ENCODE measurements at regions of chrX and their contacts with region 1.

Region 1: GRCh38 chrX:13087322-13088155 is 43.1 kb upstream of the FAM9C start:
- DNase-seq: peak in 7 of 9 experiments; percentile 41 to 94 (median 75)
- ATAC-seq: peak; percentile 60
- H3K4me3 ChIP-seq: peak overlapping the region in 1 of 2 experiments; percentile 10
- H3K4me3 Mint-ChIP-seq: peak overlapping the region; percentile 80
- H3K27ac ChIP-seq: peak overlapping the region; percentile 57 to 96
- H3K27ac Mint-ChIP-seq: peak overlapping the region; percentile 98
- H3K4me1 ChIP-seq: peaks cover 90% of the 10 kb centered on the region
- H3K4me1 Mint-ChIP-seq: peaks cover 84% of the 10 kb centered on the region
- H3K27me3 ChIP-seq: no peaks in the 10 kb centered on the region
- H3K27me3 Mint-ChIP-seq: no peaks in the 10 kb centered on the region
- CTCF ChIP-seq: no peak

Region 2: DNA sequence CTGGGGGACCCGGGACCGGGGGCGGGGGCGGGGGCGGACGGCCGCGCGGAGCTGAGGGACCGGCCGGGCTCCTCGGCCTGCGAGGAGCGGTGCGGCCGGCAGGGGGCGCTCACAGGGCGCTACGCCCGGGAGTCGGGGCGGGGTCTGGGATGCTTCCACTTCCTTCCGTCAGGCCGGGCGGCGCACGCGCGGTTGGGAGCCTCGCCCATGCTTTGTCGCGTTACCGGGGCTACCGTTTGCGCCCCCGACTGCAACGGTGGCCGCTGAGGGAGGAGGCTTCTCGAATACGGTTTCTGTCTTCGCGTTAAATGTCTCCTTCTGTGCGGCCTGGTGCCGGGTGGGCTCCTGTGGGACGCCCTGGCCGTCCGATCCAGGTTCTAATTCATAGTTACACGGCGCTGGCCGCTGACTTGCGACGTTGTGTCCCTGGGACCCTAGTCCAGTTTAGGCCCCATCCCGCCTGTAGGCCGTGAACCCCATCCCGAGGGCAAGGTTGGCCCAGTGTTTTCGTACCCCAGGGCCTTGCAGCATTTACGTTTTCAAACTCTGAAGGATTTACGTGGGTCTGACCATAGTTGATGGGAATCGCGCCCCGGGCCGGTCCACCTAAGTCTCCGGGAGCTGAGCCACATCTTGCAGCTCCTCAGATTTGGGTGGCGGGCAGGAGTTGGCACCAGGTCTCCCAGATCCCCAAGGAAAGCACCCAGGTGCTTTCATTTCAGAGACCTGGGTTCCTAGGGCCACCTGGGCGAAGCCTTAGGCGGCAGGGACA is 1329.0 kb before region 1 on chrX:
- CTCF ChIA-PET with region 1: no interaction called
- POLR2A ChIA-PET with region 1: no interaction called
- intact Hi-C with region 1: loop called in 1 of 2 experiments (anchors 10 kb)
- DNase-seq: peak; percentile 76 to 93 (median 89)
- ATAC-seq: peak; percentile 61
- H3K4me3 ChIP-seq: peak overlapping the region; percentile 76 to 91
- H3K4me3 Mint-ChIP-seq: peak overlapping the region; percentile 88
- H3K27ac ChIP-seq: peak overlapping the region; percentile 87 to 93
- H3K27ac Mint-ChIP-seq: peak overlapping the region; percentile 97
- H3K4me1 ChIP-seq: peaks cover 18% of the 10 kb centered on the region
- H3K4me1 Mint-ChIP-seq: peaks cover 34% of the 10 kb centered on the region
- H3K27me3 ChIP-seq: no peaks in the 10 kb centered on the region
- H3K27me3 Mint-ChIP-seq: no peaks in the 10 kb centered on the region
- CTCF ChIP-seq: peak; percentile 62

Region 3: DNA sequence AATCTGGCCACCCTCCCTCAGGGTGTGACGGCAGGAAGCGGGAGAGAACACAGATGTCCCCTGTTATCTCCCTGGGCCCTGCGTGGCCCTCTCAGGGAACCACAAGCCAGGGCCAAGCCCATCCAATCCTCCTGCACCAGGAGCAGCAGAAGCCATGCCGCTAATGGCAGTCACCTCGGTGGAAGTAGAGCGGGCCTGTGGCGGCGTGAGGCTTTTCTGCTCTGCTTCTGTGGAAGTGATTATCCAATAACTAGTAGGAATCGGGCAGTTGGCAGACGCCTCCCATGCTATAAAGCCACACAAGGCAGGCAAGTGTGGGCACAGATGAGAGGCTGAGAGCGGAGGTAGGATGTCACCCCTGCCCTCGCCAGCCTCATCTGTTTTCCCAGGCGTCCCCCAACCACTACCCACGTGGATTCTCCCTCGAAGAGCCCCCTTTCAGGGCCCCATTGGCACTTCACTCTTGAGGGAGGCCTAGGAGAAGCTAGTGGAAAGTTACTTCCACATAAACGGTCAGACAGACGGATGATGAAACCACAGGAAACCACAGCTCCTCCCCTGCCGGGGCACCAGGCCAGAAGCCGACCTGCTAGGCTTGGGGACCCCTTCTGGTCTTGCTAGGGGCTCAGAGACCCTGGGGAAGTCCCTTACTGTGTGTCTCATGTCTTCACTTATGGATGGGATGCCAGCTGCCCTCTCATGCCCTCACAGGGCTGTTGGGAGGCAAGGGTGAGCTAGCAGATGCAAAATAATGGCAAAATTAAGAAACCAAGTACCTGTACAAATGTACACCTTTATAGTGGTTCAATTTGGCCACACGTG is 131.4 kb before region 1 on chrX:
- CTCF ChIA-PET with region 1: interaction called, 48 read pairs
- POLR2A ChIA-PET with region 1: interaction called, 25 read pairs
- intact Hi-C with region 1: loop called in 1 of 2 experiments (anchors 1 kb)
- DNase-seq: peak in 8 of 9 experiments; percentile 50 to 83 (median 68)
- ATAC-seq: peak; percentile 22
- H3K4me3 ChIP-seq: peak overlapping the region; percentile 34 to 43
- H3K4me3 Mint-ChIP-seq: peak overlapping the region; percentile 79
- H3K27ac ChIP-seq: peak overlapping the region; percentile 62 to 89
- H3K27ac Mint-ChIP-seq: peak overlapping the region; percentile 99
- H3K4me1 ChIP-seq: peaks cover 79% of the 10 kb centered on the region
- H3K4me1 Mint-ChIP-seq: peaks cover 74% of the 10 kb centered on the region
- H3K27me3 ChIP-seq: no peaks in the 10 kb centered on the region
- H3K27me3 Mint-ChIP-seq: no peaks in the 10 kb centered on the region
- CTCF ChIP-seq: no peak

Region 4: GRCh38 chrX:13000301-13000811 is 87.2 kb before region 1 on chrX:
- CTCF ChIA-PET with region 1: interaction called, 8 read pairs
- POLR2A ChIA-PET with region 1: interaction called, 26 read pairs
- intact Hi-C with region 1: no loop called
- DNase-seq: peak in 6 of 9 experiments; percentile 31 to 73 (median 54)
- ATAC-seq: peak; percentile 55
- H3K4me3 ChIP-seq: peak overlapping the region; percentile 16 to 40
- H3K4me3 Mint-ChIP-seq: peak overlapping the region; percentile 82
- H3K27ac ChIP-seq: peak overlapping the region; percentile 65 to 84
- H3K27ac Mint-ChIP-seq: peak overlapping the region; percentile 96
- H3K4me1 ChIP-seq: peaks cover 68% of the 10 kb centered on the region
- H3K4me1 Mint-ChIP-seq: peaks cover 79% of the 10 kb centered on the region
- H3K27me3 ChIP-seq: no peaks in the 10 kb centered on the region
- H3K27me3 Mint-ChIP-seq: no peaks in the 10 kb centered on the region
- CTCF ChIP-seq: no peak

Region 5: GRCh38 chrX:13029341-13029740 is 58.2 kb before region 1 on chrX:
- CTCF ChIA-PET with region 1: interaction called, 8 read pairs
- POLR2A ChIA-PET with region 1: interaction called, 30 read pairs
- intact Hi-C with region 1: loop called (anchors 5 kb)
- DNase-seq: peak in 5 of 9 experiments; percentile 18 to 50 (median 24)
- ATAC-seq: no peak
- H3K4me3 ChIP-seq: peak overlapping the region in 1 of 2 experiments; percentile 5
- H3K4me3 Mint-ChIP-seq: peak overlapping the region; percentile 54
- H3K27ac ChIP-seq: peak overlapping the region; percentile 30 to 56
- H3K27ac Mint-ChIP-seq: peak overlapping the region; percentile 96
- H3K4me1 ChIP-seq: peaks cover 69% of the 10 kb centered on the region
- H3K4me1 Mint-ChIP-seq: peaks cover 73% of the 10 kb centered on the region
- H3K27me3 ChIP-seq: no peaks in the 10 kb centered on the region
- H3K27me3 Mint-ChIP-seq: no peaks in the 10 kb centered on the region
- CTCF ChIP-seq: no peak

Region 6: DNA sequence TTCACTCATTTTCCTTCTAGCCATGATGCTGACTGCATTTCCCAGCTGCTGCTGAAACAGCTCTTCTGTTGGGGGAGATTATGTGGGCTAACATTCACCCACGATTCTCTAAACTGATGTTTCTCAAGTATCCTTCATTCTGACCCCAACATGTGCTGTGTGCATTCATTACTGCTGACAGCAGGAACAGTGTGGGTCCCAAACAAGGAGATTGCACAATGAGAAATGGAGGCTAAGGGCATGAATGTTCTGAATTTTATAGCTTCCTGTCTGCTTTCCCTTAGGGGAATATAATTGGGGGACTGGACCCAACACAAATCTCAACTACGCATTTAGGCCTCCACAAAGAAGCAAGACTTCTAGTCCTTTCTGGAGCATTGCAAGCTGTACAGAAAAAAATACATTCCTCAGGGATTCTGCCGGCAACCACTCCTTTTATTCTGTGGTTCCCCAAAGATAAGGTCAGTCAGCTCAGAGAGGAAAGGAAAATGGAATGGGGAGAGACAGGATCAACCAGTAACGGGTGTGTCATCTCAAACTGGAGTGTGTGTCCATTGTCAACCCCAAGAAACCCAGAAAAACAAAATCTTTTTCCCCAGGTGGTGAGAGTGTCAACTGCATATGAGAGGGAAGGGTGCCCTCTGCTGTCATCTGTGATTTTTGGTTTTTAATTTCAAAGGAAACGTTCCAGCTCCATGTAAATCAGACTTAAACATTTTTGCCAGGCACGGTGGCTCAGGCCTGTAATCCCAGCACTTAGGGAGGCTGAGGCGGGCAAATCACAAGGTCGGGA is 400.4 kb after region 1 on chrX:
- CTCF ChIA-PET with region 1: interaction called, 62 read pairs
- POLR2A ChIA-PET with region 1: interaction called, 15 read pairs
- intact Hi-C with region 1: loop called (anchors 1 to 2 kb)
- DNase-seq: peak in 8 of 9 experiments; percentile 8 to 75 (median 44)
- ATAC-seq: peak; percentile 78
- H3K4me3 ChIP-seq: no peak overlapping the region
- H3K4me3 Mint-ChIP-seq: no peak overlapping the region
- H3K27ac ChIP-seq: peak overlapping the region in 1 of 2 experiments; percentile 43
- H3K27ac Mint-ChIP-seq: peak overlapping the region; percentile 84
- H3K4me1 ChIP-seq: peaks cover 20% of the 10 kb centered on the region
- H3K4me1 Mint-ChIP-seq: peaks cover 42% of the 10 kb centered on the region
- H3K27me3 ChIP-seq: no peaks in the 10 kb centered on the region
- H3K27me3 Mint-ChIP-seq: no peaks in the 10 kb centered on the region
- CTCF ChIP-seq: peak; percentile 56

Measured in CD8-positive, alpha-beta T cell (primary cell).